Prostate gland (tissue), 2 donors: ENCODE measurements at regions of chr4 and their contacts with region 1.

Region 1: GRCh38 chr4:153084980-153085630 is 119.1 kb upstream of the TRIM2 start:
- DNase-seq: peak; percentile 60
- H3K4me3 ChIP-seq: no peak overlapping the region
- H3K27ac ChIP-seq: no peak overlapping the region
- H3K4me1 ChIP-seq: no peaks in the 10 kb centered on the region
- H3K27me3 ChIP-seq: no peaks in the 10 kb centered on the region
- CTCF ChIP-seq: peak; percentile 91 to 96 (median 94)
- POLR2A ChIP-seq: no peak

Region 2: GRCh38 chr4:152843481-152844090 is 241.5 kb before region 1 on chr4:
- intact Hi-C with region 1: loop called (anchors 5 kb)
- DNase-seq: no peak
- H3K4me3 ChIP-seq: no peak overlapping the region
- H3K27ac ChIP-seq: no peak overlapping the region
- H3K4me1 ChIP-seq: no peaks in the 10 kb centered on the region
- H3K27me3 ChIP-seq: no peaks in the 10 kb centered on the region
- CTCF ChIP-seq: no peak
- POLR2A ChIP-seq: no peak